PC-3 (cell line): ENCODE measurements at regions of chr3 and their contacts with region 1.

Region 1: GRCh38 chr3:37243820-37244748 is 69.7 kb upstream of the LRRFIP2 start:
- DNase-seq: peak; percentile 95
- ATAC-seq: peak; percentile 67
- H3K4me3 ChIP-seq: peak overlapping the region; percentile 87
- H3K27ac ChIP-seq: peak overlapping the region; percentile 81
- H3K4me1 ChIP-seq: peaks cover 43% of the 10 kb centered on the region
- H3K27me3 ChIP-seq: no peaks in the 10 kb centered on the region
- CTCF ChIP-seq: no peak

Region 2: DNA sequence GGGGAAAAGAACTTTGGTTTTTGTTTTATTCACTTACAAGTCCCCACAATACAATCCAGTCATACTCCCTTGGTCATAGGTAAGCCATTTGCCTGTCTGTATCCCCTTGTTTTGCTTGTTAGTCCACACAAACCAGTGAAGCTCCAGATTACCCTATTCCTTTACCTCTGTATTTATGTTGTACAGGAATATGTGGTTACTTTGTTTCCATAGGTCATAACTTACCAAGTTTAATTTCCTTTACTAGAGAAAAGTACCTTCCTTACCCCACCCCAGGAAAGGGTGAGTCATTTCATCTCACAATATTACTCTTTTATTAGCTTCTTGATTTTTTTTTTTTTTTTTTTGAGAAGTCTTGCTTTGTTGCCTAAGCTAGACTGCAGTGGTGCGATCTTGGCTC is 43.7 kb after region 1 on chr3:
- CTCF ChIA-PET with region 1: no interaction called
- POLR2A ChIA-PET with region 1: no interaction called
- intact Hi-C with region 1: loop called (anchors 2 kb)
- DNase-seq: peak; percentile 69
- ATAC-seq: peak; percentile 86
- H3K4me3 ChIP-seq: no peak overlapping the region
- H3K27ac ChIP-seq: peak overlapping the region; percentile 69
- H3K4me1 ChIP-seq: peaks cover 41% of the 10 kb centered on the region
- H3K27me3 ChIP-seq: no peaks in the 10 kb centered on the region
- CTCF ChIP-seq: no peak